ENCODE measurements at regions of chr3 and their contacts with region 1.

Region 1: GRCh38 chr3:13495921-13496723 is 16.0 kb downstream of the HDAC11 start:
- DNase-seq: no peak
- H3K4me3 ChIP-seq: no peak overlapping the region
- H3K27ac ChIP-seq: peak overlapping the region in 1 of 4 donors; percentile 21
- H3K4me1 ChIP-seq: peaks cover 5 to 16% (median 8%) of the 10 kb centered on the region in 3 donors
- H3K27me3 ChIP-seq: no peaks in the 10 kb centered on the region
- CTCF ChIP-seq: peak; percentile 88 to 93 (median 90)
- POLR2A ChIP-seq: no peak

Region 2: DNA sequence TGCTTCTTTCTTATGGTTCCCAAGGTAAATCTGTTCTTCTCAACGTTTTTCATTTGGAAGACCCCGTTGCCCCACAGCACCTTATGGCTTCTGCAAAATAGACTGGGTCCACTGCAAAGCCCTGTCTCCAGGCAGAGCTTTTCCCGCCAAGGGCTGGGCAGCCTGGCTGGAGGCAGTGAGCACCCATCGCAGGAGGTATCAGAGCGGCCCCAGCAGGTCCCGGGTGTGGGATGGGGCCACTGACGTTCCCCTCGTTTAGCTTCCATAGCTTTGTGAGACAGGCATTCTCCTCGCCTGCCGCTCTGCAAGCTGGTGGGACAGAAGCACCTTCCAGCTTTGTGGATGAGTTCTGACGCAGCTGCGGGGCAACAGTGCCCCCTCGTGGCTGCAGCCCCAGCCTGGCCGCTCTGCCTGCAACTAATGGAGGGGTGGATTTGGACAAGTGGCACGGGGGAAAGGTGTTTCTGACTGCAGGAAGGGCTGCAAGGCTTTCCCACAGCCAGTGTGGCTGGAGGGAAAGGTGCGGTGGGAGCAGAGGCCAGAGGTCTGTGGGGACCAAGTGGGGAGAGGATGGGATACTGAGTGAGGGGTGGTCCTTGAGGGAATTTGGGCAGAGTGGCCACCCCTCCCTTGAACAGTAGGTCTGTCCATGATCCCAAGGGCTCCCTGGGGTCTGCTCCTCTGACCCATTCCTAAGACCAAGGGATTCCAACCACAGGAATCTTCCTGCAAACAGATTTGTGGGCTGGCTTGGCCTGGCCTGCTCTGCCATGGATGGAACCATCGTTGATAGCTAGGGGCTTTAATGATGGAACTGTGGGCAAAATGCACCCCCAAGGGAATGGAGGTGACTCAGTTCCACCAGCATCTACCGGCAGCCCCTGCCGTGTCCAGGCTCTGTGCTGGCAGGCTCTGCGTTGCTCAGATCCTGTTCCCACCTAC is 152.2 kb after region 1 on chr3:
- intact Hi-C with region 1: loop called (anchors 2 kb)
- DNase-seq: no peak
- H3K4me3 ChIP-seq: no peak overlapping the region
- H3K27ac ChIP-seq: no peak overlapping the region
- H3K4me1 ChIP-seq: peaks cover 10 to 24% (median 12%) of the 10 kb centered on the region in 3 donors
- H3K27me3 ChIP-seq: peaks cover 0 to 55% (median 0%) of the 10 kb centered on the region in 4 donors
- CTCF ChIP-seq: peak; percentile 89 to 98 (median 96)
- POLR2A ChIP-seq: no peak

Region 3: GRCh38 chr3:13839726-13840320 is 343.7 kb after region 1 on chr3:
- intact Hi-C with region 1: no loop called
- DNase-seq: no peak
- H3K4me3 ChIP-seq: no peak overlapping the region
- H3K27ac ChIP-seq: no peak overlapping the region
- H3K4me1 ChIP-seq: peaks cover 0 to 16% (median 0%) of the 10 kb centered on the region in 3 donors
- H3K27me3 ChIP-seq: peaks cover 0 to 45% (median 0%) of the 10 kb centered on the region in 4 donors
- CTCF ChIP-seq: no peak
- POLR2A ChIP-seq: no peak

Measured in esophagus squamous epithelium (tissue), 5 donors.